Activated T-helper 1 cell treated with anti-CD3 and anti-CD28 coated beads, Interleukin-12 subunit alpha, Interleukin-12 subunit beta, Interleukin-2, Interleukin-4 antibody, amounts not matched to agents 30 ng/mL and 10 ng/mL and 1 ng/mL, durations not matched to agents 14 hours and 24 hours and 36 hours (primary cell): ENCODE measurements at regions of chr2 and their contacts with region 1.

Region 1: DNA sequence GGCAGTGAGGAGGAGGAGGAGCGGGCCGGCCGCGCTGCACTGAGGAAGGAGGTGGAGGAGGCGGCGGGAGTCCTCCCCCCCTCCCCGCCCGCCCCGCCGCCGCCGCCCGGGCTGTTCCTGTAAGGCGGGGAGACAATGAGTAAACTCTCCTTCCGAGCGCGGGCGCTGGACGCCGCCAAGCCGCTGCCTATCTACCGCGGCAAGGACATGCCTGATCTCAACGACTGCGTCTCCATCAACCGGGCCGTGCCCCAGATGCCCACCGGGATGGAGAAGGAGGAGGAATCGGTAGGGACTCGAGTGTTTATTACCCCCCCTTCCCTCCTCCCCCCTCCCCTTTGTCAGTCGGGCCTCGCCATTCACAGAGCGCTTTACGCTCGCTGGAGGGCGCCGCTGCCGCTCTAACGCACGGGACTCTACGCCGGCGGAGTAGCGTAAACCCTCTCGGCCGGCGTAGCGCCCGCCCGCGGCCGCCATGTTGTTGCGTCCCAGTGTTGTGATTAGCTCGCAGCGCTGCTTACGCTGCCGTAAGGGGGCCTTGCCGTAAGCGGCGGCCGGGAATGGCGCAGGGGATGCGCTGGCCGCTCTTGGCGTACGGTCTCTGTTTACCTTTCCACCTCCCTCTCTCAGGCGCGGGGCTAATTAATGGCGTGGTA is 460 bp downstream of the EPC2 start:
- DNase-seq: peak; percentile 92
- H3K4me3 Mint-ChIP-seq: peak overlapping the region; percentile 93
- H3K27ac Mint-ChIP-seq: peak overlapping the region; percentile 96
- H3K4me1 Mint-ChIP-seq: peaks cover 31% of the 10 kb centered on the region
- H3K27me3 Mint-ChIP-seq: peaks cover 7% of the 10 kb centered on the region

Region 2: GRCh38 chr2:147843864-147844696 is 800.9 kb before region 1 on chr2:
- intact Hi-C with region 1: loop called (anchors 1 kb)
- DNase-seq: peak; percentile 85
- H3K4me3 Mint-ChIP-seq: peak overlapping the region; percentile 95
- H3K27ac Mint-ChIP-seq: peak overlapping the region; percentile 84
- H3K4me1 Mint-ChIP-seq: peaks cover 35% of the 10 kb centered on the region
- H3K27me3 Mint-ChIP-seq: peaks cover 52% of the 10 kb centered on the region

Region 3: DNA sequence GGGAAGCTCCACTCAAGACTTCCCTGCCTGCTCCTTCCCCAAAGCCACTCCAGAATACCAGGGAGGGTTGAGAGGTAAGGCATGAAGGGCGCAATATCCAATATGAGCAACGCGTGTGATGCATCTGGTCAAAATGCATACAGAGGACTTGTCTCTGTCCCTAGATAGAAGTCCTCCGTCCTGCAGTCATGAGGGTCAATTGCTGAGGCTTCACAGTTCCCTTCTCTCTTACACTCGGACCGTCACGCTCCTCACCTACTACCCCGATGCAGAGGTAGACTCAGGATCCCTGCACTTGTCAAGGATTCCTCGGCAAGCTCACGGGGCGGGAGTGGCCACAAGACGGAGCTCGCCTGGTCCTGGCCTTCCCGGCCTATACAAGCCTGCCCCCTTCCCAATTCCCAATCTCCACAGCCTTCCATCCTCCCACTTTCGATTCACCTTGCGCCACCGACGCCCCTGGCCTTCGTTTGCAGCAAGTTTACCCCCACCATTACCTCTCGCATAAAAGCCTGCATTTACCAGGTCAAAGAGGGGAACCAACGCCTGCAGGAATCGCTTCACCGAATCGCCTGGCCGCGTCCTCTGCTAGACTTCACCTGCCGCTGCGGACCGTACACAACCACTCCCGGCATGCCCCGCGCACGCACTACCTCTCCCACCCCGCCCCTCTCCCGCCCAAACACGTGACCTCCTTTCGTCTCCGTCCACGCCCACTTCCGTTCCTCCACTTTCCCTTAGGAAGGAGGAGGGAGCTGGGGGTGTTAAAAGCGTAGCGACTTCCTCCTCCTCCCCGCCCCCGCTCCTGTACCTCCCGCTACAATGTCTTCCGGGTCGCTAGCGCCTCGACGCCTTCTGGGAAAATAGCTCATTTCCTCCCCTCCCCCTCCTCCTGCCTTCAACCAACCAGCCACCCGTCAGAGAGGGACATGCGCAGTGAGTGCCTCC is 624.6 kb before region 1 on chr2 and contains the start of gene ORC4:
- intact Hi-C with region 1: loop called (anchors 1 kb)
- DNase-seq: peak; percentile 95
- H3K4me3 Mint-ChIP-seq: peak within 1 kb of the TSS; percentile 98
- H3K27ac Mint-ChIP-seq: peak within 1 kb of the TSS; percentile 95
- H3K4me1 Mint-ChIP-seq: peaks cover 40% of the 10 kb centered on the region
- H3K27me3 Mint-ChIP-seq: no peaks in the 10 kb centered on the region
- total RNA-seq, gene ORC4: 29.2 and 34.2 TPM in 2 replicates

Region 4: DNA sequence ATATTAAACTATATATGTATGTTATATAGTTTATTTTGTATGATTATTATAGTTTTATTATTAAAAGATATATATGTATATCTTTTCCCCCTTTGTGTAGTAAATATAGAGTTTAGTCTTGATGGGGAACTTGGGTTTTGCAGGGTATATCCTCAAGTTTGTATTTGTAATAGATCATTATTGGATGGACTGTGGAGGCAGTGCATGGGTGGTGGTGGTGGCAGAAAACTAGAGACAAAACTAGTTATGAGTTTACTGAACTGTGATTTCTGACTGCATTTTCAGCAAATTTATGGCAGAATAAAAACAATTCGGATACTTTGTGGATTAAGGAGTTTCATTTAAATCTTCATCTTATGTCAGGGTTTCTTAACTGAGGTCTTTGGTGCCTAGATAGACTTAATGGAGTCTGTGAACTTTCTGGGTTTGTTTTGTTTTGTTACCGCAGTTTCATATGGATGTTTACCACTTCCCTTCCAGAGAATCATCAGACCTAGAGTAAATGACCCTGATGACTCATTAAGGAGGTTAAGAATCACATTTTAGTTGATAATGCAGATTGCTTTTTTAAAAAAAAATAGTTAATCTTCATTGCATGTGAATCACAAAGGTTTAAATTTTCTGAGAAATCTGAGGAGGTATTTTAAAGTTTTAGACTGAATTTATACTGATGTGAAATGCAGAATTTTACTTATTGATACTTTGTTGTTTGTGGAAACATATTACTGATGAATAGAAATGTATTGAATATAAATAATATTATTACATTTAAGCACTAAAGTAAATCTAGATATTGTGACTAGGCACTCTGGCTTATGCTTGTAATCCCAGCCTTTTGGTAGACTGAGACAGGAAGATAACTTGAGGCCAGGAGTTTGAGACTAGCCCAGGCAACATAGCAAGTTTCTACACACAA is 14.1 kb after region 1 on chr2:
- intact Hi-C with region 1: loop called (anchors 1 kb)
- DNase-seq: no peak
- H3K4me3 Mint-ChIP-seq: peak overlapping the region; percentile 25
- H3K27ac Mint-ChIP-seq: peak overlapping the region; percentile 49
- H3K4me1 Mint-ChIP-seq: peaks cover 66% of the 10 kb centered on the region
- H3K27me3 Mint-ChIP-seq: no peaks in the 10 kb centered on the region

Region 5: DNA sequence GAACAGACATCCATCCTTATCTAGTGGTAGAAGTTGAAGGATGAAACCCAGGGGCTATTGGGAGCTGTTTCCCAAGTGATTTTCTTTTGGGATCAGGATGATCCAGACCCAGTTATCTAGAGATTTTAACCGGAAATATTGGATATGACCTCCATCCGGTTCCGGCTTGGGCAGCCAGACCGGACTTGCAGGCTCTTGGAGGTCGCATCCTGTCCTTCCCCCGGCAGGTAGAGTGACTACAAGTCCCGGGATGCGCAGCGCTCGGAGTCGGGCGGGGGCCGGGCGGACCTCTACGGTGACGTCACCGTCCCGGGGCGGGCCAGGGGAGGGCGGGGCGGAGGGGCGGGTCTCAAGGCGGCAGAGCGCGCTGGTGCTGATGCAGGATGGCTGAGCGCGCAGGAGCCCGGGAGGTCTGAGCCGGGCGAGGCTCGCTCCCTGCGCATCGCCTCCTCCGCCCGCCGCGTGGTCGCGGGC is 229.9 kb after region 1 on chr2 and contains the start of gene KIF5C:
- intact Hi-C with region 1: loop called (anchors 1 kb)
- DNase-seq: peak; percentile 77
- H3K4me3 Mint-ChIP-seq: peak within 1 kb of the TSS; percentile 91
- H3K27ac Mint-ChIP-seq: peak within 1 kb of the TSS; percentile 83
- H3K4me1 Mint-ChIP-seq: peaks cover 19% of the 10 kb centered on the region
- H3K27me3 Mint-ChIP-seq: peaks cover 18% of the 10 kb centered on the region
- total RNA-seq, gene KIF5C: 17.9 and 20.7 TPM in 2 replicates

Region 6: DNA sequence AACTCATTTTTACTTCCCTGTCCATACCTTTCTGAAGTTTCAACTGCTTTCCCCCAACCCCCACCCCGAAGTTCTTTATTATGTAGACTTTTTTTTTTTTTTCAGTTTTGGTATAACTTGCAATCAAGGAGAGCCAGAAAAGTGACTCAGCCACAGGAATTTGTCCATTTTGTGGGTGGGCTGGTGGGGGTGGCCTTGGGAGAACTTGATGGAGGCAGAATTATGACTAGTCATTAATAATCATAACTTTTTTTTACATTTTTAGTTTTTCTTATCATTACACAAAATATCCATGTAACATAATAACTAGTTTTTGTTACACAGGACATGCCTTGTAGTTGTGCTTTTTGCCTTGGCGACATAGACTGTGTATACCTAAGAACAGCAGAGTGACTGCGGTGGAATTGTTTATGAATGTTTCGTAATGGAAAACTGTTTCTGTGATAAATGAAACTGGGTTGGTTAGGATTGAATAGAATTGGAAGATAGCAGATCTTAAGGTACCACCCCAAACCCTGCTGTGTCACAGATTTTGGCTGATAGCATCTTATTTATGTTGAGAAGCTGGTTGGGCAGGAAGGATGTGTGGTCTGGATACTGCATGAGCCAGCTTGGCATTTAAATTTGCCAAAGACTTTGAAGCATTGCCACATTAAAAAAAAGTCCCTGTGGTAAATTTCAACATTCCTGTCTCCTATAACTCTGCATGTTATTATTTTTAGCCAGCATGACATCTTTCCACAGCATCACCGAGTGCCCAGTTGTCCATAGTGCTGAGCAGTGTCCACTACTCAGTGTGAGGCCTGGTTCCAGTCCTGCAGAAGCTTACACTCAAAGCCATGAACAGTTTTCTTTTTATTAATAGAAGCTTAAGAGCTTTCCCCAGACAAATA is 424.2 kb after region 1 on chr2:
- intact Hi-C with region 1: loop called (anchors 1 kb)
- DNase-seq: no peak
- H3K4me3 Mint-ChIP-seq: peak overlapping the region; percentile 1
- H3K27ac Mint-ChIP-seq: peak overlapping the region; percentile 74
- H3K4me1 Mint-ChIP-seq: peaks cover 19% of the 10 kb centered on the region
- H3K27me3 Mint-ChIP-seq: peaks cover 14% of the 10 kb centered on the region